ENCODE measurements at regions of chr7 and their contacts with region 1.

Region 1: DNA sequence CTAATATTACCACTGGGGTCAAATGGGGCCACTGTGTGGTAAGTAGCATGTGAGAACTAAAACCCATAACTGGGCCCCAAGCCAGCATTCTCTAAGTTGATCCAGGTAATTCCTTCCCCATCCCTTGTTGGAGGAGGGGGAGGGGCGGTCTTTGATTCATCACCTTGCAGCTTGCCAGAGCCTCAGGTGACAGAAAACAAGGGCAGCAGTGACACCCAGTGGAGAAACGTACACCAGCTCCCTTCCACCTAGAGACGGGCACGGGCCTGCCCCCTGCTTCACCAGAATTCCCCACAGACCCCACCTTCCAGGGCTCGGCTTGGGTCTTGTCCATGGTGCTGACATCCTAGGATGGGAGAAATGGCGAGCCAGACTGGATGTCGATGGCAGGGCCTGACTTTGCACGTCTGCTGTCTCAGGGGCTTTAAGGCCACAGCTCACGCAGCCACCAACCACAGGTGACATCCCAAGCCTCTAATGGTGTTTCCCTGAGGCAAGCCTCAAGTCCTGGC is 102.0 kb downstream of the STRA8 start:
- DNase-seq: peak; percentile 79
- ATAC-seq: peak; percentile 92
- H3K4me3 ChIP-seq: no peak overlapping the region
- H3K27ac ChIP-seq: no peak overlapping the region
- H3K4me1 ChIP-seq: peaks cover 14% of the 10 kb centered on the region
- H3K27me3 ChIP-seq: no peaks in the 10 kb centered on the region
- CTCF ChIP-seq: peak; percentile 84

Region 2: DNA sequence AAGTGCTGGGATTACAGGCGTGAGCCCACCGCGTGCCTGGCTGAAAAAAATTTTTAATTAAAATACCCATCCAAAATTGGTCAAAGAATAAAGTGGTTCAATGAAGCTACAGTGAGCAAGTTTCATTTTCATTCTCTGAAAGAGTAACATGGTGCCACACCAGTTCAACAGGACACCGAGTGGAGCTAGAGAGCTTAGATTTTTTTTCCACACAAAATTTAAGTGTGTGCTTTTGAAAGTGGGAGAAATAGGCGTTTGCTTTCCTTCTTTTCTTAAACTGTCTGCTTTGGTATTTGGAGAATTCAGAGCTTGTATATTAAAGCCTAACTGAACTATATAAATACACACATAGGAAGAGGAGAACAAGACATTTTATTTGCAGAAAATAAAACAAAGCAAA is 645.7 kb before region 1 on chr7:
- CTCF ChIA-PET with region 1: no interaction called
- POLR2A ChIA-PET with region 1: no interaction called
- intact Hi-C with region 1: loop called (anchors 5 kb)
- DNase-seq: peak; percentile 15
- ATAC-seq: peak; percentile 51; the same call in 1 of the 2 replicates
- H3K4me3 ChIP-seq: no peak overlapping the region
- H3K27ac ChIP-seq: no peak overlapping the region
- H3K4me1 ChIP-seq: 0 out of 2 replicates have a peak, but pooled peaks cover 11% of the 10 kb centered on the region
- H3K27me3 ChIP-seq: no peaks in the 10 kb centered on the region
- CTCF ChIP-seq: peak; percentile 42; the same call in 1 of the 2 replicates

Region 3: DNA sequence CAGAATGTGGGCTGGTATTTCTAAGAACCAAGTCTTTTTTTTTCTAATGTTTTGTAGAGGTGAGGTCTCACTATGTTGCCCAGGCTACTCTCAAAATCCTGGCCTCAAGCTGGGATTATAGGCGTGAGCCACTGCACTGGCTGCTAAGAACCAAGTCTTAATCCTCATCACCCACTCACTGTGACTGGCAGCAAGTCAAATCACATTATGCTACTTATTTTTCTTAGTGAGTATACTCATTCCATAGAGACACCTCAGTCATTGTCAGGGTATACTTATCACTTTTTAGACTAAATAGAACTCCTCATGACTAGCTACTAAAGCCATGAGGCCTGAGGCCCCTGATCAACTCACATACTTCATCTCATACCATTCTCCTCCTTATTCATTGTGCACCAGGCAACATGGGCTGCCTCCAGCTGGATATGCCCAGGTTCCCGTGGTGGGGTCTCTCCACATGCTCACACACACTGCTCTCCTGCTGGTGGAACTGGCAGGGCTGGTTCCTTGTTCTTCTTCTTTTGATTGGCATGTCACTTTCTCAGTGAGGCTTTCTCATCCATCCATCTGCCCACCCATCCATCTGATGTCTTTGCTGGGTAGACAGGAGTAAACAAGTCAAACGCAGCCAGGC is 14.2 kb after region 1 on chr7:
- CTCF ChIA-PET with region 1: no interaction called
- POLR2A ChIA-PET with region 1: no interaction called
- intact Hi-C with region 1: no loop called
- DNase-seq: no peak
- ATAC-seq: no peak
- H3K4me3 ChIP-seq: no peak overlapping the region
- H3K27ac ChIP-seq: no peak overlapping the region
- H3K4me1 ChIP-seq: no peaks in the 10 kb centered on the region
- H3K27me3 ChIP-seq: peaks cover 13% of the 10 kb centered on the region; the same call in 1 of the 2 replicates
- CTCF ChIP-seq: no peak